Activated naive CD4-positive, alpha-beta T cell treated with anti-CD3 and anti-CD28 coated beads for 36 hours (primary cell): ENCODE measurements at regions of chr7 and their contacts with region 1.

Region 1: DNA sequence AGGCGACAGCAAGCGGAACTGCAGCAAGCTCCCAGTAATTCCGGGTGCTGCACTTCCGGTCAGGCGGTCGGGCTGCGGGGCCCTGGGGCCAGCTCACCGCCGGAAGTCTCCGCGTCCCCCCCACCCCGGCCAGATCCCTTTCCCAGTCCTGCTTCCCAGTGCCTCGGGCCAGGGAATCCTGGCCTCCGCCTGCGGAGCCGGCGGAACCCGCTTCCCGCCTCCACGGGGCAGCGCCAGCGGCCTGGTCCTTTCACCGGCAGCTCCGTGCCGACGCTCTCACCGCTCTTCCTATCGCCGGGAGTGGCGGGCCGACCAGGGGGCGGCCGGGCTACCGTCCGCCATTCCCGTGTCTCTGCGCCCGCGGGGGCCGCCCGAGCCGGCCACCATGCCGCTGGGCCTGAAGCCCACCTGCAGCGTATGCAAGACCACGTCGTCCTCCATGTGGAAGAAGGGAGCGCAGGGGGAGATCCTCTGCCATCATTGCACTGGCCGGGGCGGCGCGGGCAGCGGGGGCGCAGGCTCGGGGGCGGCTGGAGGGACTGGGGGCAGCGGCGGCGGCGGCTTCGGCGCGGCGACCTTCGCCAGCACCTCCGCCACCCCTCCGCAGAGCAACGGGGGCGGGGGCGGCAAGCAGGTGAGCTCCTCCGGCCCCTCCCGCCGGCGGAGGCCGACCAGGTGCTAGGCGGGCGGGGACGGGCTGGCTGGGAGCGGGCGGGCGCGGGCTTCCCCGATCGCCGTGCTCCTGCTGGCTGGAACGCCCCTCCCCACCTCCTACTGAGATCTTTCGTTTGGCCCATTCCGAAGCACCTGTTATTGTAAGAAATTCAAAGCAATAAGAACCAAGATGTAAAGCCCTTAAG is at the start of gene GATAD1:
- DNase-seq: peak; percentile 89
- H3K4me3 Mint-ChIP-seq: peak within 1 kb of the TSS; percentile 82
- H3K27ac Mint-ChIP-seq: peak within 1 kb of the TSS; percentile 84
- H3K4me1 Mint-ChIP-seq: peaks cover 12% of the 10 kb centered on the region
- H3K27me3 Mint-ChIP-seq: no peaks in the 10 kb centered on the region
- total RNA-seq, gene GATAD1: 27.5 to 29.6 TPM

Region 2: GRCh38 chr7:91089382-91089963 is 1358.1 kb before region 1 on chr7:
- CTCF ChIA-PET with region 1: interaction called, 5 read pairs
- intact Hi-C with region 1: loop called (anchors 2 kb)
- DNase-seq: peak; percentile 11
- H3K4me3 Mint-ChIP-seq: peak overlapping the region; percentile 19
- H3K27ac Mint-ChIP-seq: no peak overlapping the region
- H3K4me1 Mint-ChIP-seq: peaks cover 17% of the 10 kb centered on the region
- H3K27me3 Mint-ChIP-seq: no peaks in the 10 kb centered on the region

Region 3: GRCh38 chr7:91826377-91826776 is 621.2 kb before region 1 on chr7:
- CTCF ChIA-PET with region 1: interaction called, 4 read pairs
- intact Hi-C with region 1: loop called (anchors 1 kb)
- DNase-seq: no peak
- H3K4me3 Mint-ChIP-seq: no peak overlapping the region
- H3K27ac Mint-ChIP-seq: no peak overlapping the region
- H3K4me1 Mint-ChIP-seq: no peaks in the 10 kb centered on the region
- H3K27me3 Mint-ChIP-seq: no peaks in the 10 kb centered on the region

Region 4: DNA sequence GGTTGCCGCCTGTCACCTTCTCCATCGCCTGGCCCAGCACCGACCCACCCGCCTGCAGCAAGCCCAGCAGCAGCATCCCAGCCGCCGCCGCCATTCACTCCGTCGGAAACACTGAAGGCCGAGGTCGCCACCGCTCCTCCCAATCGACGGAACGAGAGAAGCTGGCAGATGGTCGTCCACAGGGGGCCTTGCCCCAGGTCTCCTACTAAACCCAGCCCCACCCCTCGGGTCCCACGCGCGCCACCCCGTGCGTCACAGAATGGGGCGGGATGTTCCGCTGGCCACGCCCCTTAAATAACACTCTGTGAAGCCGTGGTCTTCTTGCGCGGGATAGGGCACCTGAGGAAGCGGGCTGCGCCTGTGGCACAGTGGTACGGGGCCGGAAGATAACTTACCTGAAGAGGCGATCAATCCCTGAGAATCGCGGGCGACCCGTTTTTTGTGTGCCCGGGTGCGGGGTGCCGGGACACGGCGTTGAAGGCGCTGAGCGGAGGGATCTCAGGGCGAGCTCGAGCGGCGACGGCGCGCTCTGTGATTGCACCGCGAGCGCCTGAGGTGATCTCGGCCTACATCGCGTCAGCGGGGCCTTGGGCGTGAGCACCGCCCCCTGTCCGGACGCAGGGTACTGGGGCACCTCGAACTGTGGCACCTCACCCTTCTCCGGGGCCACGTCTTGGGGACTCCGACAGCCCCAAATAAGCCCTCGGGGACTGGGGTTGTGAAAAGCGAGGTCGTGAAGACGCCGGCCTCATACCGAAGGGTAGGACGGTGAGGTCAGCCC is 313.1 kb before region 1 on chr7 and contains the start of gene CYP51A1:
- CTCF ChIA-PET with region 1: interaction called, 6 read pairs
- intact Hi-C with region 1: loop called (anchors 1 kb)
- DNase-seq: peak; percentile 93
- H3K4me3 Mint-ChIP-seq: peak within 1 kb of the TSS; percentile 96
- H3K27ac Mint-ChIP-seq: peak within 1 kb of the TSS; percentile 99
- H3K4me1 Mint-ChIP-seq: peaks cover 36% of the 10 kb centered on the region
- H3K27me3 Mint-ChIP-seq: no peaks in the 10 kb centered on the region
- total RNA-seq, gene CYP51A1: 52.8 to 55.5 TPM

Region 5: GRCh38 chr7:92425321-92425947 is 22.1 kb before region 1 on chr7:
- CTCF ChIA-PET with region 1: interaction called, 84 read pairs
- intact Hi-C with region 1: loop called (anchors 1 kb)
- DNase-seq: peak; percentile 20
- H3K4me3 Mint-ChIP-seq: peak overlapping the region; percentile 19
- H3K27ac Mint-ChIP-seq: no peak overlapping the region
- H3K4me1 Mint-ChIP-seq: peaks cover 11% of the 10 kb centered on the region
- H3K27me3 Mint-ChIP-seq: peaks cover 14% of the 10 kb centered on the region

Region 6: GRCh38 chr7:92567460-92567859 is 119.9 kb after region 1 on chr7:
- CTCF ChIA-PET with region 1: no interaction called
- intact Hi-C with region 1: no loop called
- DNase-seq: no peak
- H3K4me3 Mint-ChIP-seq: no peak overlapping the region
- H3K27ac Mint-ChIP-seq: no peak overlapping the region
- H3K4me1 Mint-ChIP-seq: no peaks in the 10 kb centered on the region
- H3K27me3 Mint-ChIP-seq: no peaks in the 10 kb centered on the region

Region 7: DNA sequence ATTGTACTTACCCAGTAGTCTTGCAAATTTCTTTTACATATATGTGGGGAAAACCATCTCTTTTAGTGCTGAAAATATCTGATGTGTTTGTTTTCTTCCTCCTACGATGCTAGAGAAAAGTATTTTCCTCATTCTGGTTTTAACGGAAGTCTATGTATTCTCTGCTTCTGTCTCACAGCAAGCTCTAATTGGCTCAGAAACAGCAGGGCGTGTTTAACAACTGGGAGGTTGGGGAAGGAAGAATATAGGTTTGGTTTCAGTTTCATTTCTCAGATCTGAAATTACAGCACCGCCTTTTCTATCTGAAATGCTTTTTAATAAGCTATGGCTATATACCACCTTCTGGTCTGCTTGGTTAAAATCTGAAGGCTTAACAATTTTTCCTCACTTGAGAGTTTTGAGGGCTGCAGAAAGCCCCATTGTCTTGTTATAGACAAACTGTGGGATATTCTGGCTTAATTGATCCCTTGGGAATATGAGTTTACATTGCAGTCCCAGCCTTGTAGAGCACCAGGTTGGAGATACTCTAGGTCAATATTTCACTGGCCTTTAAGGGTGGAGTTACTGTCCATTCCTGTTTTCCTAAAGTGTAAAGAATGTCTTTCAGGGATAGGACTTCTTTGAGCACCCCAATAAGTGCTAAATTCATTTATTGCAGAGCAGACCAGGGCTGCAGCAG is 670.4 kb after region 1 on chr7 and contains the start of gene SAMD9:
- CTCF ChIA-PET with region 1: no interaction called
- intact Hi-C with region 1: loop called (anchors 1 kb)
- DNase-seq: peak; percentile 70
- H3K4me3 Mint-ChIP-seq: peak within 1 kb of the TSS; percentile 71
- H3K27ac Mint-ChIP-seq: peak within 1 kb of the TSS; percentile 65
- H3K4me1 Mint-ChIP-seq: peaks cover 47% of the 10 kb centered on the region
- H3K27me3 Mint-ChIP-seq: no peaks in the 10 kb centered on the region
- total RNA-seq, gene SAMD9: 2.9 to 3.1 TPM